ENCODE measurements at regions of chr16 and their contacts with region 1.

Region 1: GRCh38 chr16:3059000-3059722 is 6.3 kb upstream of the IL32 start:
- DNase-seq: peak; percentile 90 to 93
- ATAC-seq: peak; percentile 91 to 98 (median 94)
- H3K4me3 ChIP-seq: peak overlapping the region; percentile 90
- H3K27ac ChIP-seq: peak overlapping the region; percentile 76
- H3K4me1 ChIP-seq: peaks cover 35% of the 10 kb centered on the region
- H3K27me3 ChIP-seq: no peaks in the 10 kb centered on the region
- CTCF ChIP-seq: peak; percentile 97

Region 2: GRCh38 chr16:3099732-3100499 is 40.8 kb after region 1 on chr16:
- intact Hi-C with region 1: loop called (anchors 5 kb)
- DNase-seq: peak; percentile 93 to 94
- ATAC-seq: peak; percentile 91 to 96 (median 95)
- H3K4me3 ChIP-seq: peak overlapping the region; percentile 52
- H3K27ac ChIP-seq: no peak overlapping the region
- H3K4me1 ChIP-seq: peaks cover 8% of the 10 kb centered on the region
- H3K27me3 ChIP-seq: peaks cover 0 to 2% (median 0%) of the 10 kb centered on the region in 3 donors
- CTCF ChIP-seq: no peak

Region 3: GRCh38 chr16:3129137-3130131 is 70.3 kb after region 1 on chr16:
- intact Hi-C with region 1: loop called (anchors 1 to 5 kb)
- DNase-seq: peak; percentile 58 to 83
- ATAC-seq: peak; percentile 64 to 85 (median 76)
- H3K4me3 ChIP-seq: peak overlapping the region; percentile 57
- H3K27ac ChIP-seq: peak overlapping the region; percentile 59
- H3K4me1 ChIP-seq: peaks cover 28% of the 10 kb centered on the region
- H3K27me3 ChIP-seq: no peaks in the 10 kb centered on the region
- CTCF ChIP-seq: peak; percentile 89

Region 4: DNA sequence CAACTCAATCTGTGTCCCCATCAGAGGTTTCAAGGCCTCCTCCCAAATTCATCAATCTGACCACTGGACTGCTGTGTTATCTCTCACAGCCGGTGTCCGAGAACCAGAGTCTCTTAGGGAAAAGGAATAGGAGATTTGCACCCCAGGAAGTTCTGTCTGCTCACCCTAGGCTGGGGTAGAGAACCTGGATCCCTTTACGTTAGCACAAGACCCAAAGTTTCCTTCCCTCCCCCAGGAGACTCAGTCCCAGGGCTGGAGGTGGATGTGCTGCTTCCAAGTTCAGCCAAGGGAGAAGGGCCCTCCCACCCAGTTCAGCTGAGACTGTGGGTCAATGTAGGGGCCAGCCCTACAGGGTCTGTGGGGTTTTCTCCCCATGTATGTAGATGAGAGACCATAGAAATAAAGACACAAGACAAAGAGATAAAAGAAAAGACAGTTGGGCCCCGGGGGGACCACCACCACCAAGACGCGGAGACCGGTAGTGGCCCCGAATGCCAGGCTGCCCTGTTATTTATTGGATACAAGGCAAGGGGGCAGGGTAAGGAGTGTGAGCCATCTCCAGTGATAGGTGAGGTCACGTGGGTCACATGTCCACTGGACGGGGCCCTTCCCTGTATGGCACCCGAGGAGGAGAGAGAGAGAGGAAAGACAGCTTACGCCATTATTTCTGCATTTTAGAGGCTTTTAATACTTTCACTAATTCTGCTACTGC is 106.1 kb after region 1 on chr16:
- intact Hi-C with region 1: loop called (anchors 2 to 5 kb)
- DNase-seq: no peak
- ATAC-seq: peak in 1 of 4 donors; percentile 29
- H3K4me3 ChIP-seq: peak overlapping the region; percentile 52
- H3K27ac ChIP-seq: no peak overlapping the region
- H3K4me1 ChIP-seq: peaks cover 4% of the 10 kb centered on the region
- H3K27me3 ChIP-seq: peaks cover 0 to 49% (median 14%) of the 10 kb centered on the region in 3 donors
- CTCF ChIP-seq: no peak

Region 5: DNA sequence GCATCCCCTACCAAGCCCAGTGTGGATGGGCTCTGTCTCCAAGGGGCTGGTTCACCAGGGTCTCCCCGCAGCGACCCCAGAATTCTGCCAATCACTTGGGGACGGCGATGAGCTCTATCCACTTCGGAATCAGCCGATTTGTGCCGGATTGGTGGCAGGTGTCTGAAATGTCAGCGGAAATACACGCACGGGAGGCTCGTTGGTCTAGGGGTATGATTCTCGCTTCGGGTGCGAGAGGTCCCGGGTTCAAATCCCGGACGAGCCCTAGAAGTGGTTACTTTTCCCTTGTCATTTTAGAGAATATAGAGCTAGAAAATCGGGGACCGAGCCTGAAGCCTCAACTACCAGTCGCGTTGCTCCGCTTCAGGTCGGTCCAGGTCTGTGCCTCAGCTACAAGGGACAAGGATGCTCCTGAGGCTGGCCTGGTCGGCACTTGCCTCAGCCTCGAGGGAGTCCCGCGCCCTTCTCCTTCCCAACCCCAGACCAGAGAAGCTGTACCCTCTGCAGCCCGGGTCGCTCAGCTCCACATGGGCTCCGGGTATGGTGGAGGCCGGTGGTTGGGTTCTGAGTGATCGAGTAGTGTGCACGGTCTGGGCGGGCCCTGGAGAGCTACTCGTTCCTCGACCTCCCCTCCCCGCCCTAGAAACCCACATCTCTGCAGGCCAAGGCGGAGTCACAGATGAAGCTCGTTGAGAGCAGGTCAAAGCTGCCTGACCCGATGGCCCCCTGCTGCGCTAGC is 112.9 kb after region 1 on chr16:
- intact Hi-C with region 1: loop called (anchors 2 to 5 kb)
- DNase-seq: no peak
- ATAC-seq: no peak
- H3K4me3 ChIP-seq: no peak overlapping the region
- H3K27ac ChIP-seq: no peak overlapping the region
- H3K4me1 ChIP-seq: peaks cover 16% of the 10 kb centered on the region
- H3K27me3 ChIP-seq: peaks cover 0 to 92% (median 40%) of the 10 kb centered on the region in 3 donors
- CTCF ChIP-seq: no peak

Measured in psoas muscle (tissue), 8 donors.